Transverse colon (tissue), 4 donors: ENCODE measurements at regions of chr11 and their contacts with region 1.

Region 1: DNA sequence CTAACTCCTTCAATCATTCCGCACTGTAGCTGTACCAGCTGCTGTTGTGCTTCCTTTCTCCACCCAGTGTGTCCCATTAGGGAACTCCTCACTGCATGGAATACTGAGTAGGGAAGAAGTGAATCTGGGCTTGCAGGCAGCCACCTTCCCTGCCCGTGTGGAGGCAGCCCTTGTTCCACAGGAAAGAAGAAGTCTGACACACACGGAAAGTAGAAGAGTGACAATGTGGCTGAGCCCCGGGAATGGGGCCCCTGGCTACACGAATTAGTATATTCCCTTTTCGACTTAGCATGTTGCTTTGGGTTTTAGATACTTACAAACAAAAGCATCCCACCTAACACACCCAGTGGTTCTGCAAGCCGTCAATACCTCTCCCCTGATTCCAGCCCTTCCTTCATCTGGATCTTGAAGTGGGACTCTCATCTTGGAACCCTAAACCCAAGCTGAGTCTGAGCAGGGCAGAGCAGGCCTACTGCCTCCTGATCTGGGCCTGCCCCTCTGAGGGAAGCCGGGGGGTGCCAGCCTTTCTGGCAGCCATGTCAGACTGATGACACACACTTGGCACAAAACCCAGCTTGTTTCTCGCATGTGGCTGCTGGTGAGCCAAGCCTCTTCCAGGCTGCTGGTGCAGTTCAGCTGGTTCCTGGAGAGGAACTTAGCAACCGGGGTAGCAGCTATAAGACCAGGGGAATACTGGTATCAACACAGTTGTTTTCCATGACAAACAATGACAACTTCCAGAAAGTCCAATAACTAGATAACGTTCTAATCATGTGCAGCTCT is 71.6 kb downstream of the C11orf58 start:
- DNase-seq: no peak
- H3K4me3 ChIP-seq: no peak overlapping the region
- H3K27ac ChIP-seq: no peak overlapping the region
- H3K4me1 ChIP-seq: peaks cover 0 to 15% (median 2%) of the 10 kb centered on the region in 4 donors
- H3K27me3 ChIP-seq: no peaks in the 10 kb centered on the region
- CTCF ChIP-seq: no peak
- EP300 ChIP-seq: no peak
- POLR2A ChIP-seq: no peak

Region 2: DNA sequence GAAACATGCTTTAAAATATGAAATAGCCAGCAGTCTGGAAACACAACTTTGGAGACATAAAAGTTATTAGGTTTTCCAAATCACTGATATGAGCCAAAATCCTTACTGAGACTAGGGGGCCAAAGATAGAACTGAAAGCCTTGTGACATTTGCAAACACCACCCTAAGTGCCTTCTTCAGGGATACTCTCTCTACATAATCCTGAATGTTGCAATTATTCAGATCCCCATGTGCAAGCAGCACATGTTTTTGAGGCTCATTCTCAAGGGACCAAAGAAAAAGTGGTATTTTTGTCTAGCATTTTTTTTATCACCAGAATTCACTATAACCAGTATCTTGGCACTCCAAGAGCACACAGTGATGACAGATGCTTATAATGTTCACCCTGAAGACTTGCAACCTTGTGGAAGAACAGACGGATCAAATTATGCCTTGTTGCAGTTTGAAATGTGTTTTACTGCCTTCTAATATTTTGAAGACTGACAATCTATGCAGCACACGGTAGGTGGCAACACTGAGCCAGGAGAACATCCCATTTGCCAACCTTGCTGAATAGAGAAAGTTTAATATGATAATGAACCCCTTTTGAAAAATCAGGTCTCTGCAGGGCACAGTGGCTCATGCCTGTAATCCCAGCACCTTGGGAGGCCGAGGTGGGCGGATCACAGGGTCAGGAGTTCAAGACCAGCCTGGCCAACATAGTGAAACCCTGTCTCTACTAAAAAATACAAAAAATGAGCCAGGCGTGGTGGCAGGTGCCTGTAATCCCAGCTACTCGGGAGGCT is 125.6 kb after region 1 on chr11:
- in situ Hi-C with region 1: loop called in 1 of 4 experiments (anchors 10 kb)
- intact Hi-C with region 1: no loop called
- DNase-seq: peak; percentile 25
- H3K4me3 ChIP-seq: no peak overlapping the region
- H3K27ac ChIP-seq: no peak overlapping the region
- H3K4me1 ChIP-seq: peaks cover 0 to 7% (median 0%) of the 10 kb centered on the region in 4 donors
- H3K27me3 ChIP-seq: no peaks in the 10 kb centered on the region
- CTCF ChIP-seq: peak; percentile 53 to 67 (median 57)
- EP300 ChIP-seq: no peak
- POLR2A ChIP-seq: no peak